Prostate gland (tissue), 2 donors: ENCODE measurements at regions of chr18 and their contacts with region 1.

Region 1: GRCh38 chr18:59056706-59057492 is 82.8 kb upstream of the SEC11C start:
- DNase-seq: no peak
- H3K4me3 ChIP-seq: no peak overlapping the region
- H3K27ac ChIP-seq: peak overlapping the region; percentile 90 to 95
- H3K4me1 ChIP-seq: peaks cover 18% of the 10 kb centered on the region
- H3K27me3 ChIP-seq: no peaks in the 10 kb centered on the region
- CTCF ChIP-seq: peak; percentile 61 to 93 (median 66)
- POLR2A ChIP-seq: no peak

Region 2: GRCh38 chr18:58864146-58865032 is 192.5 kb before region 1 on chr18 and contains the start of gene ZNF532:
- intact Hi-C with region 1: loop called (anchors 2 kb)
- DNase-seq: peak; percentile 63
- H3K4me3 ChIP-seq: peak within 1 kb of the TSS; percentile 31 to 55
- H3K27ac ChIP-seq: peak within 1 kb of the TSS; percentile 98 to 100
- H3K4me1 ChIP-seq: peaks cover 12% of the 10 kb centered on the region
- H3K27me3 ChIP-seq: no peaks in the 10 kb centered on the region
- CTCF ChIP-seq: no peak
- POLR2A ChIP-seq: no peak
- total RNA-seq, gene ZNF532: 231 to 299 TPM

Region 3: DNA sequence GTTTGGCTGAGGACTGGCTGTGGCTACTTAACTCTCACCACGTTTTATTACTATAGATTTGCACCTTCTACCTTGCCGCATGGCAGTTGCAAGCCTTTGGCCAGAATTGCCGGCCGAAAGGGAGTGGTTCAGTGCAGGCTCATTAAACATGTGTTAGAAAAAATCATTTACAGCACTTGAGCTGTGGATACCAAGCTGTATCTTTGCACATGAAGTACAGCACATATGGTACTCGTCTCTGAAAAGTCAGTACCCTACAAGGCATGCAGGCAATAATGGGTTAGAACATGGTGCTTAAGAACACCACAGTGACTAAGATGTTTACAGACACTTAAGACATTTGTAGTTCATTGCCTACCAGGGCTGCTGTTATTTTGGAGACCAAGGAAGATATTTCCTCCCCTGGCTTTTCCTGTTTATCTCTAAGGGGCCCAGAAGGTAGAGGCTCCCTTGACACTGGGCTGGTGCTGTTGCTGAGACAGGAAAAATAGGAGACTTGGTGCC is 89.1 kb before region 1 on chr18:
- intact Hi-C with region 1: loop called (anchors 5 kb)
- DNase-seq: no peak
- H3K4me3 ChIP-seq: no peak overlapping the region
- H3K27ac ChIP-seq: peak overlapping the region; percentile 82 to 87
- H3K4me1 ChIP-seq: peaks cover 13% of the 10 kb centered on the region
- H3K27me3 ChIP-seq: no peaks in the 10 kb centered on the region
- CTCF ChIP-seq: no peak
- POLR2A ChIP-seq: no peak

Region 4: GRCh38 chr18:58980991-58981390 is 75.9 kb before region 1 on chr18:
- intact Hi-C with region 1: no loop called
- DNase-seq: no peak
- H3K4me3 ChIP-seq: no peak overlapping the region
- H3K27ac ChIP-seq: peak overlapping the region in 1 of 2 donors; percentile 87
- H3K4me1 ChIP-seq: peaks cover 6% of the 10 kb centered on the region
- H3K27me3 ChIP-seq: no peaks in the 10 kb centered on the region
- CTCF ChIP-seq: no peak
- POLR2A ChIP-seq: no peak

Region 5: GRCh38 chr18:59005262-59005661 is 51.6 kb before region 1 on chr18:
- intact Hi-C with region 1: loop called (anchors 5 kb)
- DNase-seq: peak; percentile 30
- H3K4me3 ChIP-seq: no peak overlapping the region
- H3K27ac ChIP-seq: peak overlapping the region in 1 of 2 donors; percentile 46
- H3K4me1 ChIP-seq: no peaks in the 10 kb centered on the region
- H3K27me3 ChIP-seq: no peaks in the 10 kb centered on the region
- CTCF ChIP-seq: no peak
- POLR2A ChIP-seq: no peak

Region 6: GRCh38 chr18:59646228-59646962 is 589.5 kb after region 1 on chr18:
- intact Hi-C with region 1: no loop called
- DNase-seq: no peak
- H3K4me3 ChIP-seq: no peak overlapping the region
- H3K27ac ChIP-seq: no peak overlapping the region
- H3K4me1 ChIP-seq: no peaks in the 10 kb centered on the region
- H3K27me3 ChIP-seq: no peaks in the 10 kb centered on the region
- CTCF ChIP-seq: no peak
- POLR2A ChIP-seq: no peak